ENCODE measurements at regions of chr19 and their contacts with region 1.

Region 1: GRCh38 chr19:52237771-52238400 is 31.5 kb upstream of the ZNF766 start:
- DNase-seq: no peak
- H3K4me3 ChIP-seq: no peak overlapping the region
- H3K27ac ChIP-seq: no peak overlapping the region
- H3K4me1 ChIP-seq: peaks cover 0 to 4% (median 0%) of the 10 kb centered on the region in 3 donors
- H3K27me3 ChIP-seq: no peaks in the 10 kb centered on the region
- CTCF ChIP-seq: peak; percentile 68 to 92 (median 89)
- POLR2A ChIP-seq: no peak

Region 2: DNA sequence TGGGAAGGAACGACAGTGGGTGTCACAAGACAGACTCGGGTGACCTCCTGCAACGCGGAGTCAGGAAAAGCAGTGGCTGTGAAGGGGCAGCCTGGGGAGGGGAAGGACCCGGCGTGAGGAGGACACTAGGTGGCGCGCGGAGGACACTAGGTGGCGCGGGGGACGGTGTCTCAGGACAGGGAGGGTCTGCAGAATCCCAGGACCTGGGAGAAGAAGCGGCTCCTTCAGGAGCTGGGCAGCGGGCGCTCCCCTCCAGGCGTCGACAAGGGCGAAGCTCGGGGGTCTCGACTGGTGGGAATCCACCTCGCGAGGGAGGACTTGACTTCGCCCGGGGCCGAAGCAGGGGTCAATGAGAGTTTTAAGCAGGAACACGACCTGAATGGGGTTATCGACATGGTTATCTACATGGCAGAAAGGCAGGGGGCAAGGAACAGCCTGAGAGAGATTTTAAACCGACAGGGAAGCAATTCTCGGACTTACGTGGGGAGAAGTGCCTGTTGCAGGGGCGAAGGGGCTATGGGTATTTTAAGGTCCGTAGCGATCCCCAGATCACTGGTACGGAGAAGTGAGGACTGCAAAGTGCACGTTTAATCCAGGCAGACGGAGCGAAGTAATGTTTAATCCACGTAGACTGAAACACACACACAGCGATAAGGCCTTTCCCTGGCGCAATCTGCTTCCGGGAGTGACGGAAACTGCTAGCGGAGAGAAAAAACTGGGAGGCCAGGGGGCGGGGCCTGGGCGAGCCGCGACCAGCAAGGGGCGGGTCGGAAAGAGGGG is 98.4 kb before region 1 on chr19 and contains the start of gene ZNF616:
- intact Hi-C with region 1: loop called (anchors 5 kb)
- DNase-seq: peak; percentile 82
- H3K4me3 ChIP-seq: peak within 1 kb of the TSS; percentile 69 to 83 (median 80)
- H3K27ac ChIP-seq: peak within 1 kb of the TSS; percentile 92 to 98 (median 94)
- H3K4me1 ChIP-seq: peaks cover 9 to 48% (median 16%) of the 10 kb centered on the region in 3 donors
- H3K27me3 ChIP-seq: no peaks in the 10 kb centered on the region
- CTCF ChIP-seq: peak; percentile 73 to 87 (median 84)
- POLR2A ChIP-seq: peak in 1 of 4 donors; percentile 68
- total RNA-seq, gene ZNF616: 2.4 to 5.1 (median 3.7) TPM

Region 3: GRCh38 chr19:52189735-52190486 is 48.0 kb before region 1 on chr19 and contains the start of gene PPP2R1A:
- intact Hi-C with region 1: no loop called
- DNase-seq: peak; percentile 100
- H3K4me3 ChIP-seq: peak within 1 kb of the TSS; percentile 81 to 95 (median 90)
- H3K27ac ChIP-seq: peak within 1 kb of the TSS; percentile 97 to 99 (median 98)
- H3K4me1 ChIP-seq: peaks cover 25 to 58% (median 38%) of the 10 kb centered on the region in 3 donors
- H3K27me3 ChIP-seq: no peaks in the 10 kb centered on the region
- CTCF ChIP-seq: peak in 2 of 6 experiments; percentile 5 to 6
- POLR2A ChIP-seq: peak in 3 of 4 donors; percentile 26 to 97 (median 84)
- total RNA-seq, gene PPP2R1A: 126 to 225 (median 152) TPM

Measured in esophagus squamous epithelium (tissue), 5 donors.